H1 (cell line): ENCODE measurements at regions of chr19 and their contacts with region 1.

Region 1: GRCh38 chr19:1977120-1977519 is 36.1 kb downstream of the CSNK1G2 start:
- DNase-seq: no peak
- H3K4me3 ChIP-seq: no peak overlapping the region
- H3K27ac ChIP-seq: no peak overlapping the region
- H3K4me1 ChIP-seq: no peaks in the 10 kb centered on the region
- H3K27me3 ChIP-seq: no peaks in the 10 kb centered on the region
- CTCF ChIP-seq: no peak
- EP300 ChIP-seq: no peak
- POLR2A ChIP-seq: no peak
- RAD21 ChIP-seq: no peak

Region 2: DNA sequence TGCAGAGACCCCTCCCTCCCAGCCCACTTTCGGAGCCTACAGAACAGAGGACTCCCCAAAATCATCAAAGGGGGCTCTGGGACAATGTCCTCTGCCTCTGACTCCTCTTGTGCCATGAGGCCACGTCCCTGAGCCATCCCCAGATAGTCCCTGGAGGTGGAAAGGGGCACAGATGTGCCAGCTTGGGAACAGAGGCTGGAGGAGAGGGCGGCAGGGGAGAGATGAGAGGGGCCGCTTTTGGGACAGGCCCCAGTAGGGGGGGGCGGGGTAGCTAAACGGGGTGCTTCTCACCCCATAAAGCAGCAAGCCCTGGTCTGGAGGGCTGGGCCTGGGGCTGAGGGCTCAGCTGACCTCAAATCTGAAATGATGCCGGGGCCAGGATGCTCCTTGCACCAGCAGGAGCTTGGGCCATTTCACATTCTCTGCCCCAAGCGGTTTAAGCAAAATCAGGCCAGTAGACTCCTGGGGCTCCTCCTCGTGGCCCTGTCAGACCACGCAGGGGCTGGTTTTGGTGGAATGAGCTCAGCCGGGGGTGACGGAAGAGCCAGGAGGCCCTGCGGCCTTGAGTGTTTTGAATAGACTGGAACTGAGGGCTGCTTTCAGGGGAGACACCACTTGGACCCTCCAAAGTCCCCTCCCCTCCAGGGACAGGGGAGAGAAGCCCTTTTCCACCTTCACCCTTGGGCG is 196.7 kb before region 1 on chr19:
- CTCF ChIA-PET with region 1: no interaction called
- POLR2A ChIA-PET with region 1: no interaction called
- DNase-seq: no peak
- H3K4me3 ChIP-seq: no peak overlapping the region
- H3K27ac ChIP-seq: no peak overlapping the region
- H3K4me1 ChIP-seq: peaks cover 0 to 5% (median 2%) of the 10 kb centered on the region in 4 experiments; a peak in 3 of 7 replicates
- H3K27me3 ChIP-seq: peaks cover 22 to 57% (median 55%) of the 10 kb centered on the region in 4 experiments
- CTCF ChIP-seq: peak in 2 of 3 experiments; percentile 6 to 42; a peak in 3 of 4 replicates
- EP300 ChIP-seq: no peak
- POLR2A ChIP-seq: no peak
- RAD21 ChIP-seq: no peak

Region 3: GRCh38 chr19:1889906-1890305 is 87.2 kb before region 1 on chr19:
- CTCF ChIA-PET with region 1: no interaction called
- POLR2A ChIA-PET with region 1: no interaction called
- DNase-seq: no peak
- H3K4me3 ChIP-seq: no peak overlapping the region
- H3K27ac ChIP-seq: no peak overlapping the region
- H3K4me1 ChIP-seq: no peaks in the 10 kb centered on the region; a peak in 3 of 7 replicates
- H3K27me3 ChIP-seq: no peaks in the 10 kb centered on the region
- CTCF ChIP-seq: no peak
- EP300 ChIP-seq: no peak
- POLR2A ChIP-seq: no peak
- RAD21 ChIP-seq: no peak

Region 4: GRCh38 chr19:1989513-1990229 is 12.6 kb after region 1 on chr19:
- CTCF ChIA-PET with region 1: interaction called, 10 read pairs
- POLR2A ChIA-PET with region 1: interaction called, 5 read pairs
- DNase-seq: no peak
- H3K4me3 ChIP-seq: no peak overlapping the region
- H3K27ac ChIP-seq: no peak overlapping the region
- H3K4me1 ChIP-seq: no peaks in the 10 kb centered on the region
- H3K27me3 ChIP-seq: no peaks in the 10 kb centered on the region
- CTCF ChIP-seq: no peak
- EP300 ChIP-seq: no peak
- POLR2A ChIP-seq: no peak
- RAD21 ChIP-seq: no peak